ENCODE measurements at regions of chr20 and their contacts with region 1.

Region 1: DNA sequence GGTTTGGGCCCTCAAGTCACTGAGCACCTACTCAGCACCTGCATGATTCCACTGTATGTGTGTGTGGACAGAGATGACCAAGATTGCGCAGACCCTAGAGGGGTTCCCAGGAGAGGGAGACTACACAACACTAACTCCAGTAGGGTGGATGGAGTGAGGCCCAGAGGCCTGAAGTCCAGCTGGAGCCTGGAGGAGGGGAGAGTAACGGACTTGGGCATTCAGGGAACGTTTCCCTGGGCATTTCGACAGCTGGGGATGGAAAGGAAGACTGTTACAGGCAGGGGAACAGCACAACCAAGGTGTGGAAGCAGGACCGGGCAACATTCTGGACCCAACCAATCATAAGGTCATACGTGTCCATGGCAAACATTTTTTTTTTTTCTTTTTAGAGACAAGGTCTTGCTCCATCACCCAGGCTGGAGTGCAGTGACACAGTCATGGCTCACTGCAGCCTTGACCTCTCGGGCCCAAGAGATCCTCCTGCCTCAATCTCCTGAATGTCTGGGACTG is 11.1 kb upstream of the CEBPB start:
- DNase-seq: no peak
- H3K4me3 Mint-ChIP-seq: no peak overlapping the region
- H3K27ac Mint-ChIP-seq: no peak overlapping the region
- H3K4me1 Mint-ChIP-seq: no peaks in the 10 kb centered on the region
- H3K27me3 Mint-ChIP-seq: peaks cover 13% of the 10 kb centered on the region

Region 2: GRCh38 chr20:50120897-50121693 is 58.5 kb before region 1 on chr20:
- intact Hi-C with region 1: loop called (anchors 2 kb)
- DNase-seq: peak; percentile 36
- H3K4me3 Mint-ChIP-seq: no peak overlapping the region
- H3K27ac Mint-ChIP-seq: no peak overlapping the region
- H3K4me1 Mint-ChIP-seq: peaks cover 3% of the 10 kb centered on the region
- H3K27me3 Mint-ChIP-seq: no peaks in the 10 kb centered on the region

Measured in activated T-helper 1 cell treated with anti-CD3 and anti-CD28 coated beads, Interleukin-12 subunit alpha, Interleukin-12 subunit beta, Interleukin-2, Interleukin-4 antibody, amounts not matched to agents 30 ng/mL and 10 ng/mL and 1 ng/mL, durations not matched to agents 14 hours and 24 hours and 36 hours (primary cell).